Activated T-helper 2 cell treated with anti-CD3 and anti-CD28 coated beads, Interferon-gamma antibody, Interleukin-2, Interleukin-4, amounts not matched to agents 10 μg/mL and 5 μg/mL and 100 μg/mL, durations not matched to agents 14 hours and 24 hours and 36 hours (primary cell): ENCODE measurements at regions of chr10 and their contacts with region 1.

Region 1: GRCh38 chr10:49407552-49408137 is 11.8 kb upstream of the DRGX start:
- DNase-seq: peak; percentile 51
- H3K4me3 Mint-ChIP-seq: no peak overlapping the region
- H3K27ac Mint-ChIP-seq: no peak overlapping the region
- H3K4me1 Mint-ChIP-seq: peaks cover 1% of the 10 kb centered on the region
- H3K27me3 Mint-ChIP-seq: peaks cover 22% of the 10 kb centered on the region

Region 2: GRCh38 chr10:49362596-49363260 is 44.9 kb before region 1 on chr10:
- intact Hi-C with region 1: no loop called
- DNase-seq: no peak
- H3K4me3 Mint-ChIP-seq: no peak overlapping the region
- H3K27ac Mint-ChIP-seq: no peak overlapping the region
- H3K4me1 Mint-ChIP-seq: no peaks in the 10 kb centered on the region
- H3K27me3 Mint-ChIP-seq: no peaks in the 10 kb centered on the region

Region 3: DNA sequence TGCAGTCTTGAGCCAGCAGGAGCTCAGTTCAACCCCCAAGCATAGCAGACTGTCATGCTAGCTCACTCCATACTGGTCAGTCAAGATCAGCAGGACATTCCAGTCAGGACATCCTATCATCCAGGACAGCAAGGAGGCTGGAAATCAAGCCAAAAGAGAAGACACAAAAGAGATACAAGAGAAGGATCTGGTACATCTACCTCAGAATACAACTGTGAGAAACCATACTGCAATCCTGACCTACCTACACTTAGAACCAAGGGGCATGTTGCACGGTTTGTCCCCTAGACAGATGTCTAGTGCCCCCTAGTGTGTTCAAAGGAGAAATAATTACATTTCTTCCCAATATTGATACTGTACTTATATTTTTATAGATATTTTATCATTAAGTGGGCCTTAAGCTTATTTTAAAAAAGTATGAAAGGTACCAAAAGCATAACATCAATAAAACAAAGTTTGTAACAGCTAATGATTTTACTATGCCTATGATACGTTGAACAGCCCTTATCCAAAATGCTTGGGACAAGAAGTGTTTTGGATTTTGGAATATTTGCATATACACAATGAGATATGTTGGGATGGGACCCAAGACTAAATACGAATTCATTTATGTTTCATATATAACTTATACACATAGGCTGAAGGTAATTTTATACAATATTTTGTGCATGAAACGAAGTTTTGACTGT is 104.6 kb after region 1 on chr10:
- intact Hi-C with region 1: loop called (anchors 1 kb)
- DNase-seq: no peak
- H3K4me3 Mint-ChIP-seq: no peak overlapping the region
- H3K27ac Mint-ChIP-seq: no peak overlapping the region
- H3K4me1 Mint-ChIP-seq: peaks cover 22% of the 10 kb centered on the region
- H3K27me3 Mint-ChIP-seq: peaks cover 2% of the 10 kb centered on the region

Region 4: DNA sequence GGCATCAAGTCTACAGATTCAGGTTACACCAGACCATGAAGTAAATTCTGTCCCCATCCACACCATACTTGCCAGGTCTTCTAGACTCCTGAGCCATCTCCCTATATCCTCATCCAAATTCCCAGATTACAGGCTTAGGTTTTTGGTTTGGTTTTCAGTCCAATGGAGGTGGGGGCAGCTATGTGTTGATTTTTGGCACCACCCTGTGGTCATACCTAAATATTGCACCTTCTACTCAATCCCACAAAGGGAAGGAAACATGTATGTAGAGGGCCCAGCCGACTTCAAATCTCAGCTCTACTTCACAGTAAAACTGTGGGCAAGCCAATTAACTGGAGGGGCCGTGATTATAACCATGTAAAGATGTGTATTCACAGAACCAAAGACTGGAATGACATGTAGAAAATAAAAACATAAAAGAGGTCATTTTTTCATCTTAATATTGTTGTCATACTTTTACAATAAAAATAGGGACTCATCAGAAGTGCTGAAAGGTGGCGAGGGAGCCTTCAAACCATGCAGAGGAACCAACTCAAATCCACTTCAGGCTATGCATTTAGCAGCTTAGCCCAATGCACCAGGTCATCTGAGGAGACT is 111.4 kb after region 1 on chr10:
- intact Hi-C with region 1: loop called (anchors 1 kb)
- DNase-seq: no peak
- H3K4me3 Mint-ChIP-seq: no peak overlapping the region
- H3K27ac Mint-ChIP-seq: no peak overlapping the region
- H3K4me1 Mint-ChIP-seq: peaks cover 6% of the 10 kb centered on the region
- H3K27me3 Mint-ChIP-seq: no peaks in the 10 kb centered on the region

Region 5: DNA sequence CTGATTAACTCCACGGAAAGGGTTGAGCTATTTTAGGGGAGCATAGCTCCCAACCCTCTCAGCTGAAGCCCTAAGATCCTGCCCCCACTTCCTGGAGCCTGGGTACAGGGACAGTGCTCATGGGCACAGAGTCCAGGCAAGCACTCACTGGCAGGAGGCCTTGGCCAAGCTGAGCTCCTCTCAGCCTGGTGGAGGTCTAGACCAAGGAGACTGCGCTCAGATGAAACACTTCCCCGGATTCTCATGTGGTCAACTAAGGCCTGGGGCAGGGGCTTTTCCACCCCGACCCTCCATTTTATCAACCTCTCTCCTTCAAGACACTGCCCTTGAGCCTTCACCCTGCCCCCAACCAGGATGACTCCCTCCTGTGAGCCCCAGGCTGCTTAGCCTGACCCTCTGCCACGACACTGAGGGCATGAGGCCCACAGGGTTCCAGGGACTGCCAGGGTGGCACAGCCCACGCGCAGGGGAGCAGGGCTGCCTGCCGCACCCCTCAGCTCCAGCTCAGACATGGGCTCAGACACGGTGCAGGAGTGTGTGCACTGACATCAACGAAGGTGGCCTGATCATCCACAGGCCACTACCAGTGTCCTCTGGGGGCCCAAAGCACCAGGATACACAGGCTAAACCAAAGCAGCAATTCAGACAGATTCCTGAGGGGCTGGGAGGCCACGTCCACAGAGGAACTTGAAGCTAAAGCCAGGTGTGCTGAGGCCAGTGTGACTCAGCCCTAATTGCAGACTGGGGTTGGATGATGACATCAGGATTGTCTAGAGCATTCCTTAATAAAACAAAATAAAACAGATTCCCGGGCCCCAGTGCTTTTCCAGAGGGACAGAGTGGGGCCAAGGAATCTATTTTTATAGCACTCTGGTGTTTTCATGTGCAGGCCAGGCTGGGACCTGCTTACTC is 225.0 kb after region 1 on chr10:
- intact Hi-C with region 1: no loop called
- DNase-seq: no peak
- H3K4me3 Mint-ChIP-seq: no peak overlapping the region
- H3K27ac Mint-ChIP-seq: no peak overlapping the region
- H3K4me1 Mint-ChIP-seq: no peaks in the 10 kb centered on the region
- H3K27me3 Mint-ChIP-seq: peaks cover 23% of the 10 kb centered on the region